GM12878 (cell line): ENCODE measurements at regions of chr1 and their contacts with region 1.

Region 1: GRCh38 chr1:18913065-18913835 is 10.9 kb upstream of the ALDH4A1 start:
- DNase-seq: no peak
- ATAC-seq: peak; percentile 98
- H3K4me3 ChIP-seq: no peak overlapping the region
- H3K27ac ChIP-seq: no peak overlapping the region
- H3K4me1 ChIP-seq: peaks cover 5% of the 10 kb centered on the region
- H3K27me3 ChIP-seq: no peaks in the 10 kb centered on the region
- CTCF ChIP-seq: peak; percentile 99 to 100 (median 99); a peak in 5 of 6 replicates
- EP300 ChIP-seq: no peak
- POLR2A ChIP-seq: no peak
- RAD21 ChIP-seq: peak; percentile 92

Region 2: GRCh38 chr1:18926315-18927081 is 13.2 kb after region 1 on chr1:
- CTCF ChIA-PET with region 1: interaction called, 64 read pairs
- POLR2A ChIA-PET with region 1: interaction called, 3 read pairs
- RAD21 ChIA-PET with region 1: interaction called, 10 read pairs
- SMC1A ChIA-PET with region 1: interaction called, 36 read pairs
- in situ Hi-C with region 1: no loop called
- intact Hi-C with region 1: no loop called
- DNase-seq: peak; percentile 80
- ATAC-seq: peak; percentile 90
- H3K4me3 ChIP-seq: peak overlapping the region; percentile 68
- H3K27ac ChIP-seq: peak overlapping the region; percentile 98
- H3K4me1 ChIP-seq: peaks cover 55% of the 10 kb centered on the region
- H3K27me3 ChIP-seq: no peaks in the 10 kb centered on the region
- CTCF ChIP-seq: peak in 1 of 3 experiments; percentile 5; a peak in 1 of 6 replicates
- EP300 ChIP-seq: 0 out of 4 replicates have a peak, but pooled peaks of 1 of the 2 experiments have one; percentile 37
- POLR2A ChIP-seq: peak; percentile 68
- RAD21 ChIP-seq: peak; percentile 28; the same call in 1 of the 2 replicates

Region 3: GRCh38 chr1:18956369-18957135 is 43.3 kb after region 1 on chr1 and contains the start of gene IFFO2:
- CTCF ChIA-PET with region 1: interaction called, 117 read pairs
- POLR2A ChIA-PET with region 1: no interaction called
- RAD21 ChIA-PET with region 1: interaction called, 39 read pairs
- SMC1A ChIA-PET with region 1: interaction called, 18 read pairs
- in situ Hi-C with region 1: no loop called
- intact Hi-C with region 1: loop called (anchors 5 kb)
- DNase-seq: peak; percentile 34
- ATAC-seq: peak; percentile 80
- H3K4me3 ChIP-seq: peak within 1 kb of the TSS; percentile 70
- H3K27ac ChIP-seq: peak within 1 kb of the TSS; percentile 8; the same call in 1 of the 2 replicates
- H3K4me1 ChIP-seq: peaks cover 41% of the 10 kb centered on the region
- H3K27me3 ChIP-seq: peaks cover 1 to 3% of the 10 kb centered on the region in 2 experiments; a peak in 3 of 4 replicates
- CTCF ChIP-seq: no peak
- EP300 ChIP-seq: no peak
- POLR2A ChIP-seq: peak; percentile 81
- RAD21 ChIP-seq: no peak
- polyA plus RNA-seq, gene IFFO2: 1.2 to 1.9 TPM

Region 4: GRCh38 chr1:19044975-19045831 is 132.0 kb after region 1 on chr1:
- CTCF ChIA-PET with region 1: interaction called, 12 read pairs
- POLR2A ChIA-PET with region 1: no interaction called
- RAD21 ChIA-PET with region 1: interaction called, 3 read pairs
- SMC1A ChIA-PET with region 1: no interaction called
- in situ Hi-C with region 1: no loop called
- intact Hi-C with region 1: no loop called
- DNase-seq: no peak
- ATAC-seq: peak; percentile 81
- H3K4me3 ChIP-seq: no peak overlapping the region
- H3K27ac ChIP-seq: no peak overlapping the region
- H3K4me1 ChIP-seq: no peaks in the 10 kb centered on the region
- H3K27me3 ChIP-seq: peaks cover 0 to 2% of the 10 kb centered on the region in 2 experiments; a peak in 2 of 4 replicates
- CTCF ChIP-seq: no peak
- EP300 ChIP-seq: no peak
- POLR2A ChIP-seq: no peak
- RAD21 ChIP-seq: no peak

Region 5: GRCh38 chr1:19113697-19114092 is 200.4 kb after region 1 on chr1:
- CTCF ChIA-PET with region 1: interaction called, 27 read pairs
- POLR2A ChIA-PET with region 1: no interaction called
- RAD21 ChIA-PET with region 1: interaction called, 6 read pairs
- SMC1A ChIA-PET with region 1: interaction called, 14 read pairs
- in situ Hi-C with region 1: no loop called
- intact Hi-C with region 1: no loop called
- DNase-seq: no peak
- ATAC-seq: peak; percentile 85
- H3K4me3 ChIP-seq: no peak overlapping the region
- H3K27ac ChIP-seq: no peak overlapping the region
- H3K4me1 ChIP-seq: no peaks in the 10 kb centered on the region
- H3K27me3 ChIP-seq: no peaks in the 10 kb centered on the region
- CTCF ChIP-seq: peak; percentile 52 to 54 (median 53); a peak in 5 of 6 replicates
- EP300 ChIP-seq: no peak
- POLR2A ChIP-seq: no peak
- RAD21 ChIP-seq: peak; percentile 39; the same call in 1 of the 2 replicates